ENCODE measurements at regions of chr6 and their contacts with region 1.

Region 1: GRCh38 chr6:33248925-33249731 is 22.5 kb downstream of the VPS52 start:
- DNase-seq: peak; percentile 99
- ATAC-seq: peak; percentile 85
- H3K4me3 ChIP-seq: peak overlapping the region; percentile 63 to 84 (median 75)
- H3K4me3 Mint-ChIP-seq: peak overlapping the region; percentile 97
- H3K27ac ChIP-seq: peak overlapping the region; percentile 75 to 88
- H3K27ac Mint-ChIP-seq: peak overlapping the region; percentile 97
- H3K4me1 ChIP-seq: peaks cover 12 to 24% of the 10 kb centered on the region in 2 donors
- H3K4me1 Mint-ChIP-seq: peaks cover 31% of the 10 kb centered on the region
- H3K27me3 ChIP-seq: peaks cover 0 to 4% (median 0%) of the 10 kb centered on the region in 4 experiments
- H3K27me3 Mint-ChIP-seq: peaks cover 4% of the 10 kb centered on the region
- CTCF ChIP-seq: no peak

Region 2: DNA sequence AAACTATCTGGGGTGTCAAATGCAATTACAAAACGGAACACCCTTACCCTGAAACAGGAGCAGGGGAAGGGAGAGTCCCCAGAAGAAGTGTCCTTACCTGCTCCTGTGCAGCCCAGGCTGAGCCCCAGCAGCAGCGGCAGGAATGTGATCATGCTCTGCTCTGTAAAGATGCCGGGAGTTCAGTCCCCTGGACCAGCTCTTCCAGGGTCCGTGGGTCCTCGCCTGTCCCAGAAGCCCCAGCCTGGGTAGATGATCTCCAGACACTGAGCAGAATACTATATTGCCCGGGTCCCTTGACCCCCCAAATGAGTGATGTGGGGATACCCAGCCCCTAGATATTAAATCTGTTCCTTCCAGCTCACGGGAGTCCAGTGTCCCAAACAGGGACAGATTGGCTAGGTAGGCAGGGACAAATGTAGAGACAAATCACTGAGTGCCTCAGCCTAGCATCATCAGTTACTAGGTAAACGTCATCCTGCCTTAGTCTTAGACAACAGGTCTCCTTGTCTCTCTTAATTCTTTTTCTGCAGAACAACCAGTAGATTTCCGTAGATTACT is 308.4 kb before region 1 on chr6 and contains the start of gene HLA-DMB:
- CTCF ChIA-PET with region 1: interaction called, 3 read pairs
- POLR2A ChIA-PET with region 1: interaction called, 3 read pairs
- intact Hi-C with region 1: loop called (anchors 5 kb)
- DNase-seq: peak; percentile 91
- ATAC-seq: peak; percentile 51
- H3K4me3 ChIP-seq: peak within 1 kb of the TSS; percentile 95 to 100 (median 96)
- H3K4me3 Mint-ChIP-seq: peak within 1 kb of the TSS; percentile 96
- H3K27ac ChIP-seq: peak within 1 kb of the TSS; percentile 97 to 98
- H3K27ac Mint-ChIP-seq: peak within 1 kb of the TSS; percentile 99
- H3K4me1 ChIP-seq: peaks cover 66 to 82% of the 10 kb centered on the region in 2 donors
- H3K4me1 Mint-ChIP-seq: peaks cover 80% of the 10 kb centered on the region
- H3K27me3 ChIP-seq: no peaks in the 10 kb centered on the region
- H3K27me3 Mint-ChIP-seq: no peaks in the 10 kb centered on the region
- CTCF ChIP-seq: no peak
- total RNA-seq, gene HLA-DMB: 587 and 593 TPM in 2 replicates

Region 3: DNA sequence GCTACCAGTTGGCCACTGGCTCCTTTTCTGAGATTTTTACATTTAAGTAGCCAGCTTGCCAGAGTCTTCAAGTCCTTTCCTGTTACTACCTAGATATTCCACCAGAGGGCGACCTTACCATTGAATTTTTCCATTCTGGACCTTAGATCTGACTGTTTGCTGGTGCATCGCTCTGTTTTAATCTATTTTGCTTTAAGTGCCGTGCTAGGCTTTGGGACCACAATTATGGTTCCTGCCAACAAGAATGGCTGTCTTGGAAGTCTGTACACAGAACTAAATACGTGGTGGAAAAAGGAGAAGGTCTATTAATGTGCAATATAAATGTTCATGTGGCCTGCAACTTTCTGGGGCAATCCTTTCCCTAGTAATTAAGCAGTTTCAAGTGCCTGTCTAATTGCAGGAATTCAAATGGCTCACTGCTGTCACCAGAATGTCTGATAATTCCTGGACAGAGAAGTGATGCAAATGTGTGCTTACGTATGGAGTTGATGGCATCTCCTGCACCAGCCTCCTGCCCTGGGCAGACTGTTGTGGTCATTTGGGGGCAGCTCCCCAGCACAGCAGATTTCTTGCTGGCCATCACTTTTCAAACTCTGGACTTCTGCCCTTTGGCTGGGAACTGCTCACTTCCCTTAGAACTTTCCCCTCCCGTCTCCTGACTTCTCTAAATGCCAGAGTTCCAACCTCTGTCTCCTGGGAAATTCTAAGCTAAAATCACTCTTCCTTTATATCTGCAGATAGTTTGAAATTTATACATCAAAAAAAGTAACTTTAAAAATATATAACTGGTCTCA is 234.1 kb before region 1 on chr6:
- CTCF ChIA-PET with region 1: interaction called, 14 read pairs
- POLR2A ChIA-PET with region 1: no interaction called
- intact Hi-C with region 1: no loop called
- DNase-seq: peak; percentile 92
- ATAC-seq: peak; percentile 34
- H3K4me3 ChIP-seq: peak overlapping the region in 2 of 5 experiments; percentile 16 to 40
- H3K4me3 Mint-ChIP-seq: peak overlapping the region; percentile 69
- H3K27ac ChIP-seq: peak overlapping the region; percentile 2 to 100
- H3K27ac Mint-ChIP-seq: peak overlapping the region; percentile 90
- H3K4me1 ChIP-seq: peaks cover 51 to 57% of the 10 kb centered on the region in 2 donors
- H3K4me1 Mint-ChIP-seq: peaks cover 70% of the 10 kb centered on the region
- H3K27me3 ChIP-seq: no peaks in the 10 kb centered on the region
- H3K27me3 Mint-ChIP-seq: no peaks in the 10 kb centered on the region
- CTCF ChIP-seq: peak; percentile 85

Region 4: GRCh38 chr6:33147807-33148666 is 101.1 kb before region 1 on chr6:
- CTCF ChIA-PET with region 1: interaction called, 17 read pairs
- POLR2A ChIA-PET with region 1: interaction called, 5 read pairs
- intact Hi-C with region 1: loop called (anchors 1 kb)
- DNase-seq: peak; percentile 60
- ATAC-seq: peak; percentile 59
- H3K4me3 ChIP-seq: no peak overlapping the region
- H3K4me3 Mint-ChIP-seq: no peak overlapping the region
- H3K27ac ChIP-seq: no peak overlapping the region
- H3K27ac Mint-ChIP-seq: no peak overlapping the region
- H3K4me1 ChIP-seq: peaks cover 7 to 14% of the 10 kb centered on the region in 2 donors
- H3K4me1 Mint-ChIP-seq: peaks cover 11% of the 10 kb centered on the region
- H3K27me3 ChIP-seq: peaks cover 0 to 7% (median under 1%) of the 10 kb centered on the region in 4 experiments
- H3K27me3 Mint-ChIP-seq: peaks cover 4% of the 10 kb centered on the region
- CTCF ChIP-seq: peak; percentile 80

Region 5: DNA sequence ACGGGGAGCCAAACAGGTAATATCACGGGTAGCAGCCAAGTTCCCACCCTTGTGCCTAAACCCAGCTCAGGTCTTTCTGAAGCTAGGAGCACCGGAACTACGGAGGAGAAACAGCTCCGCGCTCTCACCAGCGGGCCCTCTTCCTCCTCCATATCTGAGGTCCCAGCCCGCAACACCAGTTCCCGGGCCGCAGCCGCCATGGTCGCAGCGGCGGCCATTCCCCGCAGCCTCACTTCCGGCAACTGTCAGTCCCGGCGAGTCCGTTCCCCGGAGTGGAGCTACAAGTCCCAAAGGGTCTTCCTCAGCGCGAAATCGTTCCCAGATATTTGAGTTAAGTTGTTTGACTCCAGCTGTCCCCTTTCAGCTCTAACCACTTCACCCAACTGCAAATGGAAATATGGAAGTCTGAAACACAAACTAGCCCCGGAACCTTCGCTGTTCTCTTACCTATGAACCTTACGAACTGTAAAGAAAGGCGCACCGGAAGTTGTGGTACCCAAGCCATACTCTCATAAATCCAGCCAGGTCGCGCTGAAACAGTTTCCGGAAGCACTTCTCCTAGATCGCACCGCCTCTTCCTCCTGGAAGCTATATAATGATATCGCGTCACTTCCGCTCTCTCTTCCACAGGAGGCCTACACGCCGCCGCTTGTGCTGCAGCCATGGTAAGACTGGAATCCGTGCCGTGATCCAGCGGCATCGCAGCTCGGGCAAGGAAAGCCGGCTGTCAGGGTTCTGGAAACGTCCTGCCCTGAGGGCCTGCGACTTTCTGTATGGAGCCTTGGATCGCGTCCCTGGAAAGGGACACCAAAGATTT is 22.5 kb after region 1 on chr6 and contains the starts of genes RPS18 and VPS52:
- CTCF ChIA-PET with region 1: interaction called, 14 read pairs
- POLR2A ChIA-PET with region 1: interaction called, 13 read pairs
- intact Hi-C with region 1: loop called (anchors 1 kb)
- DNase-seq: peak; percentile 99
- ATAC-seq: peak; percentile 86
- H3K4me3 ChIP-seq: peak within 1 kb of the TSS; percentile 81 to 95 (median 86)
- H3K4me3 Mint-ChIP-seq: peak within 1 kb of the TSS; percentile 94
- H3K27ac ChIP-seq: peak within 1 kb of the TSS; percentile 89 to 94
- H3K27ac Mint-ChIP-seq: peak within 1 kb of the TSS; percentile 99
- H3K4me1 ChIP-seq: peaks cover 47 to 54% of the 10 kb centered on the region in 2 donors
- H3K4me1 Mint-ChIP-seq: peaks cover 62% of the 10 kb centered on the region
- H3K27me3 ChIP-seq: no peaks in the 10 kb centered on the region
- H3K27me3 Mint-ChIP-seq: no peaks in the 10 kb centered on the region
- CTCF ChIP-seq: no peak
- total RNA-seq, gene RPS18: 3,593 and 3,830 TPM in 2 replicates
- total RNA-seq, gene VPS52: 100 and 108 TPM in 2 replicates

Region 6: GRCh38 chr6:33344701-33345697 is 95.9 kb after region 1 on chr6:
- CTCF ChIA-PET with region 1: interaction called, 4 read pairs
- POLR2A ChIA-PET with region 1: no interaction called
- intact Hi-C with region 1: loop called (anchors 1 kb)
- DNase-seq: peak; percentile 91
- ATAC-seq: peak; percentile 31
- H3K4me3 ChIP-seq: peak overlapping the region in 4 of 5 experiments; percentile 13 to 59 (median 42)
- H3K4me3 Mint-ChIP-seq: peak overlapping the region; percentile 81
- H3K27ac ChIP-seq: peak overlapping the region; percentile 92 to 93
- H3K27ac Mint-ChIP-seq: peak overlapping the region; percentile 94
- H3K4me1 ChIP-seq: peaks cover 40 to 50% of the 10 kb centered on the region in 2 donors
- H3K4me1 Mint-ChIP-seq: peaks cover 36% of the 10 kb centered on the region
- H3K27me3 ChIP-seq: no peaks in the 10 kb centered on the region
- H3K27me3 Mint-ChIP-seq: no peaks in the 10 kb centered on the region
- CTCF ChIP-seq: peak; percentile 79

Measured in B cell (primary cell).